ENCODE measurements at regions of chr14 and their contacts with region 1.

Region 1: DNA sequence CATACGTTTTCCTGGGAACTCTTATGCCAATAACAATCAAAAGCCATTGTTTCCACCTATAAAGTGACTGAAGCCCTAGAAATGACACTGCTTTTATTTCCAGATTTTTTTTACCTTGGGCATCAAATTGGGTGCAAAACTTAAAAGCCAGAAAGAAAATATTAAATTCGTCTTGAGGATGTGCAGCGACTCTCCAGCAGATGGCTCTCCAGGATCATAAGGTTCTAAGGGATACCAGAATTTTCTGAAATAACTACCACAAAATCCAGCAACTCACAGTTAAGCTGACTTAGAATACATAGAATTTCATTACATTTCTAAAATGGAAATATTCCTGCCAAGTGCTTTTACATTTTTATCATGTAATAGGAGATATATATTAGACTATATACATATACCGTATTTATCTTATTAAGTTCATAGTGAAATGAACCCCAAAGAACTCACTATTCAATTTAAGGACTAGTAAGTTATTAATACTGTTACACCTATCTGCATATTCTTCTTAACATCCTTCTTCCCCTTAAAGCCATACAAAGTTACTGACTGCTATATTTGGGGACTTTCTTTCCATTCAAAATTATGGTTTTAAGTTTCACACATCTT is 44.0 kb downstream of the ARMH4 start:
- DNase-seq: peak; percentile 30 to 49
- H3K4me3 ChIP-seq: no peak overlapping the region
- H3K27ac ChIP-seq: no peak overlapping the region
- H3K4me1 ChIP-seq: no peaks in the 10 kb centered on the region
- H3K27me3 ChIP-seq: 0 out of 2 replicates have a peak, but pooled peaks cover 9% of the 10 kb centered on the region
- CTCF ChIP-seq: peak; percentile 84

Region 2: GRCh38 chr14:57897144-57897748 is 210.8 kb before region 1 on chr14:
- CTCF ChIA-PET with region 1: no interaction called
- POLR2A ChIA-PET with region 1: no interaction called
- intact Hi-C with region 1: no loop called
- DNase-seq: no peak
- H3K4me3 ChIP-seq: no peak overlapping the region
- H3K27ac ChIP-seq: no peak overlapping the region
- H3K4me1 ChIP-seq: no peaks in the 10 kb centered on the region
- H3K27me3 ChIP-seq: peaks cover 23% of the 10 kb centered on the region
- CTCF ChIP-seq: no peak

Region 3: GRCh38 chr14:58166005-58166983 is 58.2 kb after region 1 on chr14:
- CTCF ChIA-PET with region 1: no interaction called
- POLR2A ChIA-PET with region 1: no interaction called
- intact Hi-C with region 1: loop called (anchors 1 kb)
- DNase-seq: peak; percentile 63 to 71
- H3K4me3 ChIP-seq: no peak overlapping the region
- H3K27ac ChIP-seq: no peak overlapping the region
- H3K4me1 ChIP-seq: peaks cover 5% of the 10 kb centered on the region
- H3K27me3 ChIP-seq: no peaks in the 10 kb centered on the region
- CTCF ChIP-seq: peak; percentile 88

Region 4: GRCh38 chr14:58362798-58363412 is 254.9 kb after region 1 on chr14:
- CTCF ChIA-PET with region 1: no interaction called
- POLR2A ChIA-PET with region 1: no interaction called
- intact Hi-C with region 1: loop called (anchors 2 kb)
- DNase-seq: no peak
- H3K4me3 ChIP-seq: no peak overlapping the region
- H3K27ac ChIP-seq: no peak overlapping the region
- H3K4me1 ChIP-seq: no peaks in the 10 kb centered on the region
- H3K27me3 ChIP-seq: no peaks in the 10 kb centered on the region
- CTCF ChIP-seq: peak; percentile 53

Region 5: GRCh38 chr14:58427281-58428117 is 319.4 kb after region 1 on chr14 and contains the starts of genes KIAA0586 and TIMM9:
- CTCF ChIA-PET with region 1: interaction called, 13 read pairs
- POLR2A ChIA-PET with region 1: no interaction called
- intact Hi-C with region 1: no loop called
- DNase-seq: peak; percentile 91 to 92
- H3K4me3 ChIP-seq: peak within 1 kb of the TSS; percentile 90
- H3K27ac ChIP-seq: peak within 1 kb of the TSS; percentile 80
- H3K4me1 ChIP-seq: peaks cover 22% of the 10 kb centered on the region
- H3K27me3 ChIP-seq: no peaks in the 10 kb centered on the region
- CTCF ChIP-seq: no peak
- total RNA-seq, gene KIAA0586: 13.2 and 20.4 TPM in 2 replicates
- total RNA-seq, gene TIMM9: 37.0 and 42.7 TPM in 2 replicates